B cell (primary cell): ENCODE measurements at regions of chr11 and their contacts with region 1.

Region 1: DNA sequence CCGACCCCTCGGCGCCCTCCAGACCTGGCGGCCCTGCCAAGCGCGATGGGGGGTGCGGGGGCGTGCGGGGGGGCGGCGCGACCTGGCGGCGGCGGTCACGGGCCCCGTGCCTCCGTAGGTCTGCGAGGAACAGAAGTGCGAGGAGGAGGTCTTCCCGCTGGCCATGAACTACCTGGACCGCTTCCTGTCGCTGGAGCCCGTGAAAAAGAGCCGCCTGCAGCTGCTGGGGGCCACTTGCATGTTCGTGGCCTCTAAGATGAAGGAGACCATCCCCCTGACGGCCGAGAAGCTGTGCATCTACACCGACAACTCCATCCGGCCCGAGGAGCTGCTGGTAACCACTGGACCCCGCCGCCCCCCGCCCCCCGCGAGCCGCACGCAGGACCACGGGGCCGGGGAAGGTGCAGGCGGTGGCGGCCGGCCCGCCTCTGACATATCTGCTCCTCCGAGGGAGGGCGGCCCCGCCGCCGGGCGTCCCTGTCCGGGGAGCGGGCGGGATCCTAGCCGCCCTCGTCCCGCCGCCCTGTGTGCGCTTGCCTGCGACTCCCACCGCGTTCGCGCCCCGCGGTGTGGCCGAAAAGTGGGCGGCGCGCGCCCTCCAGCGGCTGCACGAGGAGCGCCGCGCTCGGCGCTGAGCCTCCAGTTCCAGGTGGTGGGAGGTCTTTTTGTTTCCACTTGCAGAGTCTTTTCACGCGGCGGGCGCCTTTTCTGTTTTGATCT is 2.1 kb downstream of the CCND1 start:
- DNase-seq: peak; percentile 90
- ATAC-seq: peak; percentile 74
- H3K4me3 ChIP-seq: peak overlapping the region; percentile 58 to 81 (median 76)
- H3K4me3 Mint-ChIP-seq: peak overlapping the region; percentile 88
- H3K27ac ChIP-seq: peak overlapping the region; percentile 16 to 64
- H3K27ac Mint-ChIP-seq: peak overlapping the region; percentile 83
- H3K4me1 ChIP-seq: peaks cover 32 to 42% of the 10 kb centered on the region in 2 donors
- H3K4me1 Mint-ChIP-seq: peaks cover 40% of the 10 kb centered on the region
- H3K27me3 ChIP-seq: peaks cover 0 to 27% (median 19%) of the 10 kb centered on the region in 4 experiments
- H3K27me3 Mint-ChIP-seq: peaks cover 19% of the 10 kb centered on the region
- CTCF ChIP-seq: peak; percentile 97

Region 2: GRCh38 chr11:69048718-69049489 is 594.2 kb before region 1 on chr11 and contains the start of gene TPCN2:
- CTCF ChIA-PET with region 1: no interaction called
- POLR2A ChIA-PET with region 1: no interaction called
- intact Hi-C with region 1: loop called (anchors 2 kb)
- DNase-seq: peak; percentile 97
- ATAC-seq: peak; percentile 98
- H3K4me3 ChIP-seq: peak within 1 kb of the TSS; percentile 34 to 99 (median 86)
- H3K4me3 Mint-ChIP-seq: peak within 1 kb of the TSS; percentile 85
- H3K27ac ChIP-seq: peak within 1 kb of the TSS; percentile 75 to 98
- H3K27ac Mint-ChIP-seq: peak within 1 kb of the TSS; percentile 82
- H3K4me1 ChIP-seq: peaks cover 17 to 54% of the 10 kb centered on the region in 2 donors
- H3K4me1 Mint-ChIP-seq: peaks cover 38% of the 10 kb centered on the region
- H3K27me3 ChIP-seq: no peaks in the 10 kb centered on the region
- H3K27me3 Mint-ChIP-seq: peaks cover 9% of the 10 kb centered on the region
- CTCF ChIP-seq: no peak
- total RNA-seq, gene TPCN2: 71.4 and 76.2 TPM in 2 replicates

Region 3: GRCh38 chr11:69055598-69056516 is 587.2 kb before region 1 on chr11:
- CTCF ChIA-PET with region 1: interaction called, 8 read pairs
- POLR2A ChIA-PET with region 1: no interaction called
- intact Hi-C with region 1: loop called (anchors 1 kb)
- DNase-seq: peak; percentile 94
- ATAC-seq: peak; percentile 87
- H3K4me3 ChIP-seq: peak overlapping the region in 2 of 5 experiments; percentile 15 to 49
- H3K4me3 Mint-ChIP-seq: peak overlapping the region; percentile 61
- H3K27ac ChIP-seq: peak overlapping the region; percentile 92 to 98
- H3K27ac Mint-ChIP-seq: peak overlapping the region; percentile 89
- H3K4me1 ChIP-seq: peaks cover 30 to 64% of the 10 kb centered on the region in 2 donors
- H3K4me1 Mint-ChIP-seq: peaks cover 47% of the 10 kb centered on the region
- H3K27me3 ChIP-seq: no peaks in the 10 kb centered on the region
- H3K27me3 Mint-ChIP-seq: no peaks in the 10 kb centered on the region
- CTCF ChIP-seq: no peak

Region 4: DNA sequence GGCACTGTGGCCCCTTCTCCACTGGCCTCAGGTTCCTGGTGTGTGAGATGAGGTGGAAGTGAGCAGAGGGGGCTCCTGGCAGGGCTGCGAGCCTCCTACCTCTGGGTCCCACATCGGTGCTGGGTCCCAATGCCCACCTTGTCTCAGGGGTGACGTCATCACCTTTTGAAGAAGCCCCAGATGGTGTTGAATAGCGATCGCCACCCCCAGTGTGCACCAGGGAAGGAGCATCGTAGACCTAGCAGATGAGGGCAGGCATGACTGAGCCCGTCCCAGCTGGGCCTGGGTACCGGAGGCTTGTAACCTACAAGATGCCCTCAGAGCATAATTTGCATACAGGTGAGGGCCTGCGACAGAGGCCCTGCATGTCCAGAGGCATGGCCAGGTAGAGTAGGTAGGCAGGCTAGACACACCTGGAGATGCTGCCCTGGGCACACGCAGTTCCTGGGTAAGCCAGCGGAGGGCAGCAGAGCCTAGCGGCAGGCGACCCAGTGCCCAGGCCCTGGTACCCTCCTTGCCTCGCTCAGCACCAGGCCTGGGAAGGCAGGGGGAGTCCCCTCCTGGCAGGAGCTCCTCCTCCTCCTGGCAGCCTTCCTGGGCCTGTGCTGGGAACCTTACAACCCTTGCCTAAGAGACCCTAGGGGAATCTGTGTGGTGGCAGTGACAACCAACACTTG is 541.8 kb before region 1 on chr11:
- CTCF ChIA-PET with region 1: interaction called, 71 read pairs
- POLR2A ChIA-PET with region 1: no interaction called
- intact Hi-C with region 1: no loop called
- DNase-seq: peak; percentile 83
- ATAC-seq: peak; percentile 98
- H3K4me3 ChIP-seq: no peak overlapping the region
- H3K4me3 Mint-ChIP-seq: no peak overlapping the region
- H3K27ac ChIP-seq: no peak overlapping the region
- H3K27ac Mint-ChIP-seq: no peak overlapping the region
- H3K4me1 ChIP-seq: peaks cover 0 to 3% of the 10 kb centered on the region in 2 donors
- H3K4me1 Mint-ChIP-seq: peaks cover 2% of the 10 kb centered on the region
- H3K27me3 ChIP-seq: peaks cover 0 to 8% (median 2%) of the 10 kb centered on the region in 4 experiments
- H3K27me3 Mint-ChIP-seq: peaks cover 2% of the 10 kb centered on the region
- CTCF ChIP-seq: peak; percentile 99

Region 5: GRCh38 chr11:69211920-69212571 is 431.0 kb before region 1 on chr11:
- CTCF ChIA-PET with region 1: no interaction called
- POLR2A ChIA-PET with region 1: no interaction called
- intact Hi-C with region 1: no loop called
- DNase-seq: no peak
- ATAC-seq: no peak
- H3K4me3 ChIP-seq: no peak overlapping the region
- H3K4me3 Mint-ChIP-seq: no peak overlapping the region
- H3K27ac ChIP-seq: no peak overlapping the region
- H3K27ac Mint-ChIP-seq: no peak overlapping the region
- H3K4me1 ChIP-seq: peaks cover 0 to 4% of the 10 kb centered on the region in 2 donors
- H3K4me1 Mint-ChIP-seq: peaks cover 5% of the 10 kb centered on the region
- H3K27me3 ChIP-seq: no peaks in the 10 kb centered on the region
- H3K27me3 Mint-ChIP-seq: peaks cover 15% of the 10 kb centered on the region
- CTCF ChIP-seq: peak; percentile 7

Region 6: GRCh38 chr11:69675811-69676371 is 32.8 kb after region 1 on chr11:
- CTCF ChIA-PET with region 1: interaction called, 7 read pairs
- POLR2A ChIA-PET with region 1: interaction called, 7 read pairs
- intact Hi-C with region 1: loop called (anchors 1 kb)
- DNase-seq: no peak
- ATAC-seq: no peak
- H3K4me3 ChIP-seq: peak overlapping the region in 4 of 5 experiments; percentile 73 to 92 (median 80)
- H3K4me3 Mint-ChIP-seq: peak overlapping the region; percentile 94
- H3K27ac ChIP-seq: no peak overlapping the region
- H3K27ac Mint-ChIP-seq: no peak overlapping the region
- H3K4me1 ChIP-seq: peaks cover 20 to 23% of the 10 kb centered on the region in 2 donors
- H3K4me1 Mint-ChIP-seq: peaks cover 28% of the 10 kb centered on the region
- H3K27me3 ChIP-seq: peaks cover 0 to 3% (median 0%) of the 10 kb centered on the region in 4 experiments
- H3K27me3 Mint-ChIP-seq: peaks cover 6% of the 10 kb centered on the region
- CTCF ChIP-seq: no peak